Esophagus squamous epithelium (tissue), 5 donors: ENCODE measurements at regions of chr7 and their contacts with region 1.

Region 1: GRCh38 chr7:76317782-76318487 is 15.5 kb downstream of the HSPB1 start:
- DNase-seq: peak; percentile 88
- H3K4me3 ChIP-seq: peak overlapping the region; percentile 51 to 77 (median 62)
- H3K27ac ChIP-seq: peak overlapping the region; percentile 90 to 98 (median 95)
- H3K4me1 ChIP-seq: peaks cover 13 to 45% (median 14%) of the 10 kb centered on the region in 3 donors
- H3K27me3 ChIP-seq: no peaks in the 10 kb centered on the region
- CTCF ChIP-seq: no peak
- POLR2A ChIP-seq: peak in 3 of 4 donors; percentile 78 to 92 (median 84)

Region 2: GRCh38 chr7:76069238-76069638 is 248.7 kb before region 1 on chr7:
- intact Hi-C with region 1: no loop called
- DNase-seq: no peak
- H3K4me3 ChIP-seq: no peak overlapping the region
- H3K27ac ChIP-seq: peak overlapping the region in 3 of 4 donors; percentile 30 to 75 (median 71)
- H3K4me1 ChIP-seq: peaks cover 8 to 35% (median 8%) of the 10 kb centered on the region in 3 donors
- H3K27me3 ChIP-seq: no peaks in the 10 kb centered on the region
- CTCF ChIP-seq: peak in 4 of 6 experiments; percentile 30 to 77 (median 64)
- POLR2A ChIP-seq: no peak

Region 3: GRCh38 chr7:76179686-76180085 is 138.2 kb before region 1 on chr7:
- intact Hi-C with region 1: loop called (anchors 5 kb)
- DNase-seq: no peak
- H3K4me3 ChIP-seq: no peak overlapping the region
- H3K27ac ChIP-seq: no peak overlapping the region
- H3K4me1 ChIP-seq: peaks cover 0 to 9% (median 5%) of the 10 kb centered on the region in 3 donors
- H3K27me3 ChIP-seq: no peaks in the 10 kb centered on the region
- CTCF ChIP-seq: no peak
- POLR2A ChIP-seq: no peak

Region 4: GRCh38 chr7:76393116-76394031 is 75.4 kb after region 1 on chr7:
- intact Hi-C with region 1: no loop called
- DNase-seq: peak; percentile 45
- H3K4me3 ChIP-seq: peak overlapping the region; percentile 55 to 84 (median 78)
- H3K27ac ChIP-seq: peak overlapping the region; percentile 89 to 96 (median 94)
- H3K4me1 ChIP-seq: peaks cover 20 to 54% (median 30%) of the 10 kb centered on the region in 3 donors
- H3K27me3 ChIP-seq: no peaks in the 10 kb centered on the region
- CTCF ChIP-seq: peak in 1 of 6 experiments; percentile 2
- POLR2A ChIP-seq: peak in 3 of 4 donors; percentile 81 to 92 (median 81)